ENCODE measurements at regions of chr11 and their contacts with region 1.

Region 1: DNA sequence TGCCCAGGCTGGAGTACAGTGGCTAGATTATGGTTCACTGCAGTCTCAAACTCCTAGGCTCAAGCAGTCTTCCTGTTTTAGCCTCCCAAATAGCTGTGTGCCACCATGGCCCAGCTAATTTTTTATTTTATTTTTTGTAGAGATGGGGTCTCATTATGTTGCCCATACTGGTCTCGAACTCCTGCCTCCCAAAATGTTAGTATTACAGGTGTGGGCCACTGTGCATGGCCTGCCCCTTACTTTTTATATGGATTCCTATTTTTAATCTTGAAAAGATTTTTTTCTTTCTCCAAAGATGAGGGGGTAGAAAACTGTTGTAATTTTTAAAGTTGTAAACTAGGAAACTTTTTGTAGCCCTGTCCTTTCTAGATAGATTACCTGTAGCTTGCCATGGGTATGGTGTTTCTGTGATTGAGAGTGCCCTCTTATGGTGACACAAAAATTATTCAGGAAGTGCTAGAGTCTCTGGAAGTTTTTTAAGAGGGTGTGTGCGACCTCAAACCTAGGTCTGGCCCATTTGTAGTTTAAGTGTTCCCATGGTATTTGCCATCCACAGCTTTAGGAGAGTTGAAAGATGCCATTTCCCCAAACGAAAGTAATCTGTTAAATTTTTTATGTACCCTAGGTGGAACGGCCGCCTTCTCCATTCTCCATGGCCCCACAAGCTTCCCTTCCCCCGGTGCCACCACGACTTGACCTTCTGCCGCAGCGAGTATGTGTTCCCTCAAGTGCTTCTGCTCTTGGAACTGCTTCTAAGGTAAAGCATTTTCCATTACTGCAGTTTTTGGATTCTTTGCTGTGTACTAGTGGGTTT is 32.4 kb downstream of the MCAM start:
- DNase-seq: peak; percentile 29
- ATAC-seq: peak; percentile 88
- H3K4me3 Mint-ChIP-seq: no peak overlapping the region
- H3K27ac Mint-ChIP-seq: no peak overlapping the region
- H3K4me1 Mint-ChIP-seq: peaks cover 31% of the 10 kb centered on the region
- H3K27me3 Mint-ChIP-seq: no peaks in the 10 kb centered on the region

Region 2: DNA sequence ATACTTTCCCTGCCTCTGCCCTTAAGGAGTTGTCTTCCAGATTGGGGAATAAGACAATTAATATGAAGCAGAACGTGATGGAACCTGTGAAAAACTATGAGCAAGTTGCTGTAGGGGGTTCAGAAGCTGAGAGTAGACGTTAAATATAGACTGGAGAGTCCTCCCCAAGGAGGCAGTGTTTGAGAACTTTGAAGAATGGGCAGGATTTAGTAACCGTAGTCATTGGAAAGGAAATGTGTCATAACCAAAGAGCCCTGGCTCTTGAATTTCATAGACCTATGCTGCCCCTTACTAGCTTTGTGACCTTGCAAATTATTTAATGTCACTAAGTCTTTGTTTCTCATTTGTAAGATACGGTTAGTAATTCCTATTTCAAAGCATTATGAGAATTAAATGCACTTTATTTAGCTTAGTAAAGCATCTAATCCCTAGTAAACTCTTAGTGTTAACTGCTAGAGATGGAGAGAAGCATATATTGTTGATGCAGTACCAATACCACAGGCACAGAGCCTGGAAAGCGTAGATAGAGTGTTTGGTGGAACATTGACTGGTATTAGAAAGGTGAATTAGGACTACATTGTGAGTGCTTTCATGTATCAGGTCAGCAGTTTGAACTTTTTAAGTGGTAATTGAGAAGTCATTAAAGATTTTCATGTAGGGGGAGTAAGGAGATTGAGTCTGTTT is 21.7 kb before region 1 on chr11:
- CTCF ChIA-PET with region 1: interaction called, 66 read pairs
- POLR2A ChIA-PET with region 1: interaction called, 4 read pairs
- DNase-seq: peak; percentile 47
- ATAC-seq: peak; percentile 63
- H3K4me3 Mint-ChIP-seq: no peak overlapping the region
- H3K27ac Mint-ChIP-seq: no peak overlapping the region
- H3K4me1 Mint-ChIP-seq: peaks cover 50% of the 10 kb centered on the region
- H3K27me3 Mint-ChIP-seq: no peaks in the 10 kb centered on the region

Region 3: GRCh38 chr11:119273721-119274120 is 10.8 kb before region 1 on chr11:
- CTCF ChIA-PET with region 1: interaction called, 27 read pairs
- POLR2A ChIA-PET with region 1: no interaction called
- DNase-seq: no peak
- ATAC-seq: no peak
- H3K4me3 Mint-ChIP-seq: no peak overlapping the region
- H3K27ac Mint-ChIP-seq: no peak overlapping the region
- H3K4me1 Mint-ChIP-seq: no peaks in the 10 kb centered on the region
- H3K27me3 Mint-ChIP-seq: no peaks in the 10 kb centered on the region

Region 4: DNA sequence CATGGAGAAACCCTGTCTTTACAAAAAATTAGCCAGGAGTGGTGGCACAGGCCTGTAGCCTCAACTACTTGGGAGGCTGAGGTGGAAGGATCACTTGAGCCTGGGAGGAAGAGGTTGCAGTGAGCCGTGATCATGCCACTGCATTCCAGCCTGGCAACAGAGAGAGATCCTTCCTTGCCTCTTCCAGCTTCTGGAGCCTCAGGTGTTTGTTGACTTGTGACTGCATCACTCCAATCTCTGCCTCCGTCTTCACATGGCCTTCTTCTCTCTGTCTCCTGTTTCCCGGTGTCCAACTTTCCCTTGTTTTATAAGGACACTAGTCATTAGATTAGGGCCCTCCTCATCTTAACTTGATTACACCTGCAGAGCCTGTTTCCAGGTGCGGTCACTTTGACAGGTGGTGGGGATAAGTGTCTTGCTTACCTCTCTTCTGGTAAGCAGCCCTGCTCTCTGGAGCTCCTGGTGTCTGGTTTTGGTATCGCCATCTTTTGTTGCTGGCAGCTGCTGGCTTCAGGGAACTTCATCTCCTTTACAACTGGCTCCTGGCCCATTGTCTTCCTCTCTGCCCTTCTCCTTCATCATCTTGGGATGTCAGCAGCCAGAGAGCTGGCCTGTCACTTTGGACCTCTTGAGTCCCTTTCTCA is 105.2 kb after region 1 on chr11:
- CTCF ChIA-PET with region 1: no interaction called
- POLR2A ChIA-PET with region 1: no interaction called
- DNase-seq: peak; percentile 43
- ATAC-seq: peak; percentile 53
- H3K4me3 Mint-ChIP-seq: no peak overlapping the region
- H3K27ac Mint-ChIP-seq: no peak overlapping the region
- H3K4me1 Mint-ChIP-seq: no peaks in the 10 kb centered on the region
- H3K27me3 Mint-ChIP-seq: peaks cover 13% of the 10 kb centered on the region